CD8-positive, alpha-beta T cell (primary cell): ENCODE measurements at regions of chr15 and their contacts with region 1.

Region 1: GRCh38 chr15:63203451-63204090 is 14.2 kb downstream of the RAB8B start:
- DNase-seq: peak; percentile 4 to 87 (median 60)
- ATAC-seq: peak; percentile 97
- H3K4me3 ChIP-seq: no peak overlapping the region
- H3K4me3 Mint-ChIP-seq: no peak overlapping the region
- H3K27ac ChIP-seq: no peak overlapping the region
- H3K27ac Mint-ChIP-seq: peak overlapping the region; percentile 14
- H3K4me1 ChIP-seq: peaks cover 60% of the 10 kb centered on the region
- H3K4me1 Mint-ChIP-seq: peaks cover 90% of the 10 kb centered on the region
- H3K27me3 ChIP-seq: no peaks in the 10 kb centered on the region
- H3K27me3 Mint-ChIP-seq: no peaks in the 10 kb centered on the region
- CTCF ChIP-seq: no peak

Region 2: DNA sequence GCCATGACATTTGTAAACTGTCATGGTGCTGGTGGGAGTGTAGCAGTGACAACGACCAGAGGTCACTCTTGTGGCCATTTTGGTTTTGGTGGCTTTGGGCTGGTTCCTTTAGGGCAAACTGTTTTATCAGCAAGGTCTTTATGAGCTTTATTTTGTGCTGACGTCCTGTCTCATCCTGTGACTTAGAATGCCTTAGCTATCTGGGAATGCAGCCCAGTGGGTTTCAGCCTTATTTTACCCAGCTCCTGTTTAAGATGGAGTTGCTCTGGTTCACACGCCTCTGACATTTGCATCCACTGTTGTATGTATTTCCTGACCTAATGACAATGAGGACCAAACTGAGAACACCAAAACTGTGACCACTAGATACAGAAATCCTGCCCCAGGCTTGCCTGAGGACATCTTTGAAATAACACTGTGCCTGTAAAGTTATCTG is 23.4 kb after region 1 on chr15:
- CTCF ChIA-PET with region 1: interaction called, 3 read pairs
- POLR2A ChIA-PET with region 1: no interaction called
- intact Hi-C with region 1: loop called in 1 of 2 experiments (anchors 2 kb)
- DNase-seq: no peak
- ATAC-seq: no peak
- H3K4me3 ChIP-seq: no peak overlapping the region
- H3K4me3 Mint-ChIP-seq: no peak overlapping the region
- H3K27ac ChIP-seq: peak overlapping the region in 1 of 2 experiments; percentile 42
- H3K27ac Mint-ChIP-seq: peak overlapping the region; percentile 56
- H3K4me1 ChIP-seq: peaks cover 26% of the 10 kb centered on the region
- H3K4me1 Mint-ChIP-seq: peaks cover 75% of the 10 kb centered on the region
- H3K27me3 ChIP-seq: no peaks in the 10 kb centered on the region
- H3K27me3 Mint-ChIP-seq: no peaks in the 10 kb centered on the region
- CTCF ChIP-seq: no peak

Region 3: GRCh38 chr15:63735449-63735848 is 531.9 kb after region 1 on chr15:
- CTCF ChIA-PET with region 1: no interaction called
- POLR2A ChIA-PET with region 1: no interaction called
- intact Hi-C with region 1: no loop called
- DNase-seq: no peak
- ATAC-seq: no peak
- H3K4me3 ChIP-seq: no peak overlapping the region
- H3K4me3 Mint-ChIP-seq: no peak overlapping the region
- H3K27ac ChIP-seq: no peak overlapping the region
- H3K27ac Mint-ChIP-seq: no peak overlapping the region
- H3K4me1 ChIP-seq: no peaks in the 10 kb centered on the region
- H3K4me1 Mint-ChIP-seq: peaks cover 6% of the 10 kb centered on the region
- H3K27me3 ChIP-seq: no peaks in the 10 kb centered on the region
- H3K27me3 Mint-ChIP-seq: no peaks in the 10 kb centered on the region
- CTCF ChIP-seq: no peak